HCT116 (cell line): ENCODE measurements at regions of chr1 and their contacts with region 1.

Region 1: GRCh38 chr1:12124693-12125421 is 41.9 kb upstream of the TNFRSF1B start:
- DNase-seq: peak; percentile 40
- ATAC-seq: peak; percentile 77
- H3K4me3 ChIP-seq: no peak overlapping the region
- H3K27ac ChIP-seq: no peak overlapping the region
- H3K4me1 ChIP-seq: 0 out of 4 replicates have a peak, but pooled peaks cover 0 to 4% of the 10 kb centered on the region in 2 experiments
- H3K27me3 ChIP-seq: no peaks in the 10 kb centered on the region
- CTCF ChIP-seq: peak; percentile 91 to 98 (median 92)
- POLR2A ChIP-seq: no peak
- RAD21 ChIP-seq: peak; percentile 100

Region 2: GRCh38 chr1:12113433-12114339 is 11.2 kb before region 1 on chr1:
- CTCF ChIA-PET with region 1: interaction called, 11 read pairs
- POLR2A ChIA-PET with region 1: no interaction called
- RAD21 ChIA-PET with region 1: no interaction called
- intact Hi-C with region 1: no loop called
- DNase-seq: no peak
- ATAC-seq: no peak
- H3K4me3 ChIP-seq: no peak overlapping the region
- H3K27ac ChIP-seq: no peak overlapping the region
- H3K4me1 ChIP-seq: no peaks in the 10 kb centered on the region; a peak in 1 of 4 replicates
- H3K27me3 ChIP-seq: no peaks in the 10 kb centered on the region
- CTCF ChIP-seq: no peak
- POLR2A ChIP-seq: no peak
- RAD21 ChIP-seq: no peak

Region 3: GRCh38 chr1:12177999-12178441 is 53.2 kb after region 1 on chr1:
- CTCF ChIA-PET with region 1: interaction called, 13 read pairs
- POLR2A ChIA-PET with region 1: no interaction called
- RAD21 ChIA-PET with region 1: no interaction called
- intact Hi-C with region 1: no loop called
- DNase-seq: peak; percentile 35
- ATAC-seq: peak; percentile 78
- H3K4me3 ChIP-seq: peak overlapping the region; percentile 2 to 44; a peak in 3 of 4 replicates
- H3K27ac ChIP-seq: no peak overlapping the region
- H3K4me1 ChIP-seq: peaks cover 24 to 28% of the 10 kb centered on the region in 2 experiments
- H3K27me3 ChIP-seq: no peaks in the 10 kb centered on the region
- CTCF ChIP-seq: no peak
- POLR2A ChIP-seq: no peak
- RAD21 ChIP-seq: no peak

Region 4: DNA sequence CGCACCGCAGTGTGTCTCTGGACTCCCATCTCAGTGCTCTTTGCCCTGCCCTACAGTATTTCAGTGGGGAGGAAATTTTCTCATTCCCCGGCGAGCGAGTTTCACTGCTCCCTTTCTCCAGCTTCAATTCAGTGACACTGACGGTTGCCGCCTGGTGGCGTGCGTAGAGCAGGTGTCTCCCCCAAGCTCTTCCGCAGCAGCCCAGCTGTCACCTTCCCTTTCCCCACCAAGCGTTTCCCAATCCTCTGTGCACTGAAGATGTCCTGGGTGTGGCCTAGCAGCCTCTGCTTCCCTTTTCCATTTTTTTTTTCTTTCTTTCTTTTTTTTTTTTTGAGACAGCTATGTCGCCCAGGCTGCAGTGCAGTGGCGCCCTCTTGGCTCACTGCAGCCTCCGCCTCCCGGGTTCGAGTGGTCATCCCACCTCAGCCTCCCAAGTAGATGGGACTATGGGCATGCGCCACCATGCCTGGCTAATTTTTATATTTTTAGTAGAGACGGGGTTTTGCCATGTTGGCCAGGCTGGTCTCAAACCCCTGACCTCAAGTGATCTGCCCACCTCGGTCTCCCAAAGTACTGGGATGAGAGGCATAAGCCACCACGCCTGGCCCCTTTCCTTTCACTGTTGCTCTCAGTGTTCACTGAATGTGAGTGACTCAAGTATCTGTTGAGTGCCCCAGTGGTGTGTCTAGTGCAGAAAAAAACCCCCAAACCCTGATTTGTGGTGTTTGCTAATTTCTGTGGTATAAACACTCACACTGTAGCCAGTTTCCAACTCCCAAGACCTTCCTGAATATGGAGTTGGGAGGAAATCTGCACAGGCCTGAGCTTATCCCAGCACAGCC is 72.0 kb after region 1 on chr1:
- CTCF ChIA-PET with region 1: interaction called, 45 read pairs
- POLR2A ChIA-PET with region 1: interaction called, 7 read pairs
- RAD21 ChIA-PET with region 1: interaction called, 3 to 7 read pairs
- intact Hi-C with region 1: no loop called
- DNase-seq: no peak
- ATAC-seq: peak; percentile 45
- H3K4me3 ChIP-seq: no peak overlapping the region
- H3K27ac ChIP-seq: no peak overlapping the region
- H3K4me1 ChIP-seq: peaks cover 0 to 4% of the 10 kb centered on the region in 2 experiments; a peak in 1 of 4 replicates
- H3K27me3 ChIP-seq: no peaks in the 10 kb centered on the region
- CTCF ChIP-seq: peak; percentile 19 to 52 (median 19); a peak in 2 of 6 replicates
- POLR2A ChIP-seq: no peak
- RAD21 ChIP-seq: peak; percentile 62

Region 5: GRCh38 chr1:12208764-12209494 is 84.1 kb after region 1 on chr1:
- CTCF ChIA-PET with region 1: interaction called, 63 read pairs
- POLR2A ChIA-PET with region 1: interaction called, 5 read pairs
- RAD21 ChIA-PET with region 1: interaction called, 14 to 15 read pairs
- intact Hi-C with region 1: loop called (anchors 1 kb)
- DNase-seq: peak; percentile 68
- ATAC-seq: peak; percentile 95
- H3K4me3 ChIP-seq: no peak overlapping the region
- H3K27ac ChIP-seq: no peak overlapping the region
- H3K4me1 ChIP-seq: peaks cover 6 to 9% of the 10 kb centered on the region in 2 experiments; a peak in 3 of 4 replicates
- H3K27me3 ChIP-seq: no peaks in the 10 kb centered on the region
- CTCF ChIP-seq: peak; percentile 81 to 97 (median 91)
- POLR2A ChIP-seq: no peak
- RAD21 ChIP-seq: peak; percentile 99

Region 6: GRCh38 chr1:12658531-12659453 is 533.9 kb after region 1 on chr1:
- CTCF ChIA-PET with region 1: interaction called, 9 read pairs
- POLR2A ChIA-PET with region 1: no interaction called
- RAD21 ChIA-PET with region 1: no interaction called
- intact Hi-C with region 1: loop called (anchors 10 kb)
- DNase-seq: peak; percentile 81
- ATAC-seq: peak; percentile 96
- H3K4me3 ChIP-seq: no peak overlapping the region
- H3K27ac ChIP-seq: no peak overlapping the region
- H3K4me1 ChIP-seq: peaks cover 0 to 6% of the 10 kb centered on the region in 2 experiments; a peak in 1 of 4 replicates
- H3K27me3 ChIP-seq: no peaks in the 10 kb centered on the region
- CTCF ChIP-seq: peak; percentile 87 to 95 (median 91)
- POLR2A ChIP-seq: no peak
- RAD21 ChIP-seq: peak; percentile 99